ENCODE measurements at regions of chr10 and their contacts with region 1.

Region 1: GRCh38 chr10:78777466-78777865 is 291.3 kb upstream of the ZMIZ1 start:
- DNase-seq: no peak
- ATAC-seq: no peak
- H3K4me3 ChIP-seq: no peak overlapping the region
- H3K27ac ChIP-seq: no peak overlapping the region
- H3K4me1 ChIP-seq: peaks cover 36% of the 10 kb centered on the region
- H3K27me3 ChIP-seq: no peaks in the 10 kb centered on the region; a peak in 2 of 5 replicates
- CTCF ChIP-seq: no peak
- EP300 ChIP-seq: no peak
- POLR2A ChIP-seq: no peak
- RAD21 ChIP-seq: no peak

Region 2: DNA sequence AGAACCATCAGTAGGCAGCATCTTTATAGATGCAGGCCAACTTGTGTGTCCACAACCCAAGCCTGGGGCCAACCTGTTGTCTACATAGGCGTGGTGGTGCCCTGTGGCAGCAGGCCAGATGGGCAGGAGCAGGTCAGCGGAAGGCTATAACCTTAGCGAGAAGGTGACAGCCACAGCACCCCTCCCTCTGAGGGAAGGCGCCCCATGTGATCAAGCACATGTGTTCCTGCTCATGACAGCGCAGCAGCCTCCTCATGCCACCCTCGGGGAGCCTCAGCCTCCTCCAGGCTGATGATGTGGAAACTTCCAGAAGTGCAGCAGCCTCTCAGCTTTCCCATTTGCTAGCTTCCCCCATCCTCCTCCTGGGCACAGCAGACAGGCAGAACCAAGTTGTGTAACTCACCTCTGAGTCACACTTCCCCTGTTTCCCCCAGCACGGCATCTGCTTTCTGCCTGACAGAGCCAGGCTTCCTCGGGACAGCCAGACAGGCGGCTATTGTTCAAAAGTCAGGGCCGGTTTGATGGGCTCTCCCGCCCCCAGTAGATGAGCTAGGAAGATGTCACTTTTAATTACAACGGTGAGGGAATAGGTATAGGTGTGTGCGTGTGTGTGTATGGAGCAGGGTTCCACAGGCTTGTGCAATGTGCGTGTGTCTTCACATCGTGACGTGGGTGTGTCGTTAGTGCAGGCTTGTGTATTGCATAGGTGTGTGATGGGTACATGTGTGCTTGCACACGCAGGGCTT is 20.7 kb before region 1 on chr10:
- CTCF ChIA-PET with region 1: no interaction called
- POLR2A ChIA-PET with region 1: interaction called, 3 read pairs
- in situ Hi-C with region 1: no loop called
- intact Hi-C with region 1: loop called (anchors 1 kb)
- DNase-seq: peak; percentile 90
- ATAC-seq: peak; percentile 90
- H3K4me3 ChIP-seq: no peak overlapping the region
- H3K27ac ChIP-seq: no peak overlapping the region
- H3K4me1 ChIP-seq: peaks cover 50% of the 10 kb centered on the region
- H3K27me3 ChIP-seq: peaks cover 0 to 6% of the 10 kb centered on the region in 2 experiments; a peak in 1 of 5 replicates
- CTCF ChIP-seq: peak; percentile 46
- EP300 ChIP-seq: peak; percentile 28 to 41; a peak in 1 of 4 replicates
- POLR2A ChIP-seq: no peak
- RAD21 ChIP-seq: peak; percentile 29; the same call in 1 of the 2 replicates

Region 3: GRCh38 chr10:78852466-78853240 is 75.2 kb after region 1 on chr10:
- CTCF ChIA-PET with region 1: no interaction called
- POLR2A ChIA-PET with region 1: no interaction called
- in situ Hi-C with region 1: no loop called
- intact Hi-C with region 1: no loop called
- DNase-seq: no peak
- ATAC-seq: peak; percentile 62
- H3K4me3 ChIP-seq: no peak overlapping the region
- H3K27ac ChIP-seq: no peak overlapping the region
- H3K4me1 ChIP-seq: peaks cover 12% of the 10 kb centered on the region
- H3K27me3 ChIP-seq: peaks cover 1 to 2% of the 10 kb centered on the region in 2 experiments; a peak in 3 of 5 replicates
- CTCF ChIP-seq: peak; percentile 24; the same call in 1 of the 2 replicates
- EP300 ChIP-seq: no peak
- POLR2A ChIP-seq: no peak
- RAD21 ChIP-seq: no peak

Region 4: GRCh38 chr10:79052291-79053080 is 275.0 kb after region 1 on chr10:
- CTCF ChIA-PET with region 1: no interaction called
- POLR2A ChIA-PET with region 1: no interaction called
- in situ Hi-C with region 1: no loop called
- intact Hi-C with region 1: loop called (anchors 10 kb)
- DNase-seq: peak; percentile 52
- ATAC-seq: peak; percentile 72
- H3K4me3 ChIP-seq: no peak overlapping the region; a peak in 1 of 6 replicates
- H3K27ac ChIP-seq: no peak overlapping the region
- H3K4me1 ChIP-seq: peaks cover 85% of the 10 kb centered on the region
- H3K27me3 ChIP-seq: peaks cover 0 to 3% of the 10 kb centered on the region in 2 experiments; a peak in 2 of 5 replicates
- CTCF ChIP-seq: peak; percentile 27
- EP300 ChIP-seq: no peak
- POLR2A ChIP-seq: no peak
- RAD21 ChIP-seq: no peak

Measured in HepG2 (cell line).